ENCODE measurements at regions of chr18 and their contacts with region 1.

Region 1: GRCh38 chr18:3297025-3297984 is 35.4 kb downstream of the MYL12B start:
- DNase-seq: peak; percentile 97
- ATAC-seq: peak; percentile 98
- H3K4me3 Mint-ChIP-seq: peak overlapping the region; percentile 85
- H3K27ac Mint-ChIP-seq: peak overlapping the region; percentile 74
- H3K4me1 Mint-ChIP-seq: peaks cover 13% of the 10 kb centered on the region
- H3K27me3 Mint-ChIP-seq: peaks cover 37% of the 10 kb centered on the region

Region 2: GRCh38 chr18:3062798-3063680 is 234.3 kb before region 1 on chr18:
- CTCF ChIA-PET with region 1: no interaction called
- DNase-seq: peak; percentile 88
- ATAC-seq: peak; percentile 45
- H3K4me3 Mint-ChIP-seq: peak overlapping the region; percentile 62
- H3K27ac Mint-ChIP-seq: peak overlapping the region; percentile 100
- H3K4me1 Mint-ChIP-seq: peaks cover 72% of the 10 kb centered on the region
- H3K27me3 Mint-ChIP-seq: no peaks in the 10 kb centered on the region

Region 3: GRCh38 chr18:3225588-3225987 is 71.7 kb before region 1 on chr18:
- CTCF ChIA-PET with region 1: no interaction called
- DNase-seq: no peak
- ATAC-seq: no peak
- H3K4me3 Mint-ChIP-seq: no peak overlapping the region
- H3K27ac Mint-ChIP-seq: no peak overlapping the region
- H3K4me1 Mint-ChIP-seq: peaks cover 10% of the 10 kb centered on the region
- H3K27me3 Mint-ChIP-seq: no peaks in the 10 kb centered on the region

Region 4: DNA sequence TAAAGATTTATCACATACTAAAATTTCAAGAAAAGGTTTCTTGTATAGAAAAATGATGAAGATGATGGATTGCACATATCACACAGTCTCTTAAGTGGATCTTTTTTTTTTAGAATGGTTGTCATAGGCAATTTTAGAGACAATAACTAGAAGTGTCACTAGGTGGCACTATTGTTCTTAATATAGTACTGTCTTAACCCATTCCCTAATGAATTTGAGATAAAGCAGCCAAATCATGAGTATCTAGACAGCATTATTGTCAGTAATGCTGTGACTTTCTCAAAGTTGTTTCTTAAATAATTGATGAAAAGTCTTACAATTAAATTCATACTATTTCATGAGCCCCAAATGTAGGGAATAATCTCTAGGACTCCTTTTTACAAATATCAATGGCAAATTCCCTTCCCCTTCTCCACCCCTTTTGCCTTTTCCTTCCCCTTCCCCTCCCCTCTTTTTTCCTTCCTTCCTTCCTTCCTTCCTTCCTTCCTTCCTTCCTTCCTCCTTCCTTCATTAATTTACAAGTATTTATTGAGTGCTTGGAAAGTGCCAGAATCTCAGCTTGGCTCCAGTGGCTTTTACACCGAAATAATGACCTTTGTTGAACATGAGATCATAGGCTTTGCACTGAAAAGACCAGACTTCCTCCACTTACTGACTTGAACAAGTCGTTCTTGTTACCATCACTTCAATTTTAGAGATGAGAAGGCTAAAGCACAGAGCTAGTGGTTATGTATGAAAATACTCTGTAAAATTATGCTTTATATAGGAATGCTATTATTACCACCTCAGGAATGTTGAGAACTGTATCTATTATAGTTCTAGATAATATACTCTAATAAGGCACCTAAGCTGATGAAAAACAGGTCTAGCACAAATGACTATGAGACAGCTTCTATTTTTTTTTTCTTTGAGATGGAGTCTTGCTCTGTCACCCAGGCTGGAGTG is 15.6 kb before region 1 on chr18:
- CTCF ChIA-PET with region 1: interaction called, 23 read pairs
- DNase-seq: no peak
- ATAC-seq: peak; percentile 87
- H3K4me3 Mint-ChIP-seq: no peak overlapping the region
- H3K27ac Mint-ChIP-seq: no peak overlapping the region
- H3K4me1 Mint-ChIP-seq: no peaks in the 10 kb centered on the region
- H3K27me3 Mint-ChIP-seq: peaks cover 2% of the 10 kb centered on the region

Region 5: GRCh38 chr18:3380384-3380961 is 83.2 kb after region 1 on chr18:
- CTCF ChIA-PET with region 1: no interaction called
- DNase-seq: no peak
- ATAC-seq: peak; percentile 83
- H3K4me3 Mint-ChIP-seq: no peak overlapping the region
- H3K27ac Mint-ChIP-seq: no peak overlapping the region
- H3K4me1 Mint-ChIP-seq: peaks cover 3% of the 10 kb centered on the region
- H3K27me3 Mint-ChIP-seq: peaks cover 2% of the 10 kb centered on the region

Region 6: DNA sequence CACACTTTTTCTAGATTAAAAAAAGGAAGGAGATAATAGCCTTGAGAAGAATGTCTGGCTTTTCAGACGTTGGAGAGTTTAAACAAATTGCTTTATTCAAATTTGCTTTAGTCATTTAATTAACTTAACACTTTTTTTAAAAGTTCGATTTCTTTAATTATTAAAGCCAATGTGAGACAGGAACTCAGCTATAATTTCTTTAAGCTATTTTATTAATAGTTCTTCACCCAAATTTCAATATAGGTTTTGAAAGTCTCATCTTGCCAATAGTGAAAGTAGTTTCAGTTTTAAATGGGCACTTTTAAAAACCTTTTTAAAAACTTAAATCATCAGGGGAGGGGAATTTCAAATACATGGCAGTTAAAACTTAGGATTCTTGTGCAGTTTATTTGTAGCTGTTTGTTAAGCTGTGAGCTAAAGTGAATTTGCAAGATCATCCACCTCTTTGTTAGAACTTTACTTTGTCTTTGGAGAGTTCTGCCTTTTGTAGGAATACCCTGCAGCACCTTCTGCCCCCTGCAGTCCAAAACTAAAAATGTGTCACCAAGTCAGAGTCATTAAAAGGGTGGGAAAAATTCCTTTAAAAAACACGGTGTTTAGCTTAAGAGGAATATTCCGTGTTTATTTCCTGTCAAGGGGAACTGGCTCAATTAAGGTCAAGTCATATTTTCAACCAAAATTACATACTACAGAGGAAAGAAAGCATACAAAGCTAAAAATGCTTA is 157.2 kb after region 1 on chr18:
- CTCF ChIA-PET with region 1: interaction called, 19 read pairs
- DNase-seq: peak; percentile 63
- ATAC-seq: no peak
- H3K4me3 Mint-ChIP-seq: peak overlapping the region; percentile 87
- H3K27ac Mint-ChIP-seq: peak overlapping the region; percentile 83
- H3K4me1 Mint-ChIP-seq: peaks cover 55% of the 10 kb centered on the region
- H3K27me3 Mint-ChIP-seq: no peaks in the 10 kb centered on the region

Region 7: DNA sequence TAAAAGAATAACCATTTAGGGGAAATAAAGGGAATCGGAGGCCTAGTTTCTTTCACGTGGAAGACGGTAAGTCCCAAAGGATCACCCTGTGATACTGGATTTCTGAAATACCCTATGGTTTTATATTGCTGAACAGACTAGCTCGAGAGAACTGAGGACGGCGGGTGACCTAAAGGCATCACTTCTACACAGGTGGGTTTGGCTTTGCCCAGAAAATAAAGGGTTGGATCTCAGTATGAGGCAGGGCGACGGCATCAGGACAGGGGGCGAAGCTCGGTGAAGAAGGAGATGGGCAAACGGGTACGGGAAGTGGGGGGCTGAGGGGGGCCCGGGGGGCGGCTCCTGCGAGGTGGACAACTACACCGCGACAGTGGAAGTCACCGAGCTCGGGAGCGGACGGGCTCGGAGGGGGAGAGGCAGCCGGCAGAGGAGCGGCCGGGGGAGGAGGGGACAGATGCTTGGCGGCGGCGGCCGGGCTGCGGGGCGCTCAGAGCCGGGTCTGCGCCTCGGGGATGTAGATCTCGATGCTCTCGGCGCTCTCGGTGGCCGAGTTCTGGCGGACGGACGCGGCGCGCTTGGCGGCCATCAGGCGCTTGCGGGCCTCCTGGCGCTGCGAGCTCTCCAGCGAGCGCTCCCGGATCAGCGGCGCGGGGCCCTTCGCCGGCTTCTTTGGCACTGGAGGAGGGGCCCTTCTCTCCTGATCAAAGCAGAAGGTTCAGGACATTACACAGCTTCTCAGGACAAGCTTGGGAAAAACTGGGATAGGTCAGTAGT is 201.6 kb after region 1 on chr18:
- CTCF ChIA-PET with region 1: no interaction called
- DNase-seq: no peak
- ATAC-seq: peak; percentile 33
- H3K4me3 Mint-ChIP-seq: no peak overlapping the region
- H3K27ac Mint-ChIP-seq: no peak overlapping the region
- H3K4me1 Mint-ChIP-seq: peaks cover 15% of the 10 kb centered on the region
- H3K27me3 Mint-ChIP-seq: peaks cover 59% of the 10 kb centered on the region

Region 8: GRCh38 chr18:3593904-3594661 is 296.8 kb after region 1 on chr18:
- CTCF ChIA-PET with region 1: interaction called, 15 read pairs
- DNase-seq: peak; percentile 92
- ATAC-seq: peak; percentile 86
- H3K4me3 Mint-ChIP-seq: peak overlapping the region; percentile 82
- H3K27ac Mint-ChIP-seq: peak overlapping the region; percentile 94
- H3K4me1 Mint-ChIP-seq: peaks cover 35% of the 10 kb centered on the region
- H3K27me3 Mint-ChIP-seq: no peaks in the 10 kb centered on the region